ENCODE measurements at regions of chr2 and their contacts with region 1.

Region 1: DNA sequence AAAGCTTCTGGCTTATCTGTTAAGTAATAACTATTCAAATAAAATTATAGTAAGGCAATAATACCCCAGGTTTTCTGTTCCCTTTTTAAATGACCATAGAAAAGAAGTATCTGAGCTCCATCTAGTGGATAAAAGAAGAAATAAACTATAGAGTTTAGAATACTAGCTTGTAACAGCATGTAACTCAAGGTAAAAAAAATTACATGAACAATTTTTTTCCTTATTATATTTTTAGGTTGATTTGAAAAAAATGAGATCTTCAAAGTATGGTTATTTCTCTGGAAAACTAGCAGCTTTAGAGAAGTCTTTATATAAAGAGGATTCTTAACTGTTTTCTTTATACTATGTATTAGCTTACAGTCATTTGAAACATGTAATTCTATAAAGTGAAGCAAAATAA is 58.1 kb downstream of the NCKAP1 start:
- DNase-seq: peak; percentile 41
- H3K4me3 ChIP-seq: no peak overlapping the region
- H3K27ac ChIP-seq: no peak overlapping the region
- H3K4me1 ChIP-seq: no peaks in the 10 kb centered on the region; a peak in 1 of 4 replicates
- H3K27me3 ChIP-seq: no peaks in the 10 kb centered on the region
- CTCF ChIP-seq: peak; percentile 74
- EP300 ChIP-seq: no peak
- RAD21 ChIP-seq: peak; percentile 77

Region 2: GRCh38 chr2:182754231-182754630 is 225.9 kb before region 1 on chr2:
- CTCF ChIA-PET with region 1: interaction called, 18 read pairs
- POLR2A ChIA-PET with region 1: no interaction called
- DNase-seq: no peak
- H3K4me3 ChIP-seq: no peak overlapping the region
- H3K27ac ChIP-seq: no peak overlapping the region
- H3K4me1 ChIP-seq: no peaks in the 10 kb centered on the region
- H3K27me3 ChIP-seq: no peaks in the 10 kb centered on the region
- CTCF ChIP-seq: no peak
- EP300 ChIP-seq: no peak
- RAD21 ChIP-seq: no peak

Region 3: GRCh38 chr2:182763311-182763912 is 216.7 kb before region 1 on chr2:
- CTCF ChIA-PET with region 1: interaction called, 24 read pairs
- POLR2A ChIA-PET with region 1: interaction called, 3 read pairs
- DNase-seq: peak; percentile 19
- H3K4me3 ChIP-seq: no peak overlapping the region
- H3K27ac ChIP-seq: no peak overlapping the region
- H3K4me1 ChIP-seq: no peaks in the 10 kb centered on the region
- H3K27me3 ChIP-seq: no peaks in the 10 kb centered on the region
- CTCF ChIP-seq: peak; percentile 65
- EP300 ChIP-seq: no peak
- RAD21 ChIP-seq: peak; percentile 55

Region 4: GRCh38 chr2:182779323-182779722 is 200.8 kb before region 1 on chr2:
- CTCF ChIA-PET with region 1: interaction called, 153 read pairs
- POLR2A ChIA-PET with region 1: no interaction called
- DNase-seq: no peak
- H3K4me3 ChIP-seq: no peak overlapping the region
- H3K27ac ChIP-seq: no peak overlapping the region
- H3K4me1 ChIP-seq: no peaks in the 10 kb centered on the region
- H3K27me3 ChIP-seq: no peaks in the 10 kb centered on the region
- CTCF ChIP-seq: no peak
- EP300 ChIP-seq: no peak
- RAD21 ChIP-seq: no peak

Region 5: DNA sequence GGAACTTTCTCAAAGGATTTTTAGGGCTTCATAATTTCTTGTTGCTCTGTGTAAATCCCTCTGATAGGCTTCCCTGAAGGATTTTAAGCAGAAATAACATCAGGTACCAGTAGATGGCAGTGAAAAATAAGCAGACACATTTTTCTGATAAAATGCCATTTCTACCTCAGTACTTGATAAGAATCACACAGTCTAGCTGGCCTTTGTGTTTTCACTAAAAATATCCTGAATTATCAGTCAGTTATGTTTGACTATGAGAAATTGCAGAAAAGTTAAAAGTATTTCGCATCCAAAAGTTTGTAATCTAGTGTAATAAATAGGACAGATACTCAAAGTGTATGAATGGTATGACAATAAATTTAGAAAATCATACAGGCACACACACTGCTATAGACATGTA is 195.3 kb before region 1 on chr2:
- CTCF ChIA-PET with region 1: interaction called, 153 read pairs
- POLR2A ChIA-PET with region 1: no interaction called
- DNase-seq: peak; percentile 37
- H3K4me3 ChIP-seq: no peak overlapping the region; a peak in 1 of 4 replicates
- H3K27ac ChIP-seq: no peak overlapping the region
- H3K4me1 ChIP-seq: peaks cover 0 to 4% of the 10 kb centered on the region in 2 experiments; a peak in 1 of 4 replicates
- H3K27me3 ChIP-seq: no peaks in the 10 kb centered on the region
- CTCF ChIP-seq: peak; percentile 77
- EP300 ChIP-seq: no peak
- RAD21 ChIP-seq: peak; percentile 92

Region 6: GRCh38 chr2:182994228-182994912 is 14.3 kb after region 1 on chr2:
- CTCF ChIA-PET with region 1: interaction called, 15 read pairs
- POLR2A ChIA-PET with region 1: no interaction called
- DNase-seq: no peak
- H3K4me3 ChIP-seq: no peak overlapping the region
- H3K27ac ChIP-seq: no peak overlapping the region
- H3K4me1 ChIP-seq: no peaks in the 10 kb centered on the region
- H3K27me3 ChIP-seq: no peaks in the 10 kb centered on the region
- CTCF ChIP-seq: no peak
- EP300 ChIP-seq: no peak
- RAD21 ChIP-seq: no peak

Region 7: GRCh38 chr2:183000846-183001245 is 20.7 kb after region 1 on chr2:
- CTCF ChIA-PET with region 1: interaction called, 15 read pairs
- POLR2A ChIA-PET with region 1: no interaction called
- DNase-seq: no peak
- H3K4me3 ChIP-seq: no peak overlapping the region
- H3K27ac ChIP-seq: no peak overlapping the region
- H3K4me1 ChIP-seq: peaks cover 0 to 4% of the 10 kb centered on the region in 2 experiments; a peak in 1 of 4 replicates
- H3K27me3 ChIP-seq: no peaks in the 10 kb centered on the region
- CTCF ChIP-seq: no peak
- EP300 ChIP-seq: no peak
- RAD21 ChIP-seq: no peak